ENCODE measurements at regions of chr17 and their contacts with region 1.

Region 1: DNA sequence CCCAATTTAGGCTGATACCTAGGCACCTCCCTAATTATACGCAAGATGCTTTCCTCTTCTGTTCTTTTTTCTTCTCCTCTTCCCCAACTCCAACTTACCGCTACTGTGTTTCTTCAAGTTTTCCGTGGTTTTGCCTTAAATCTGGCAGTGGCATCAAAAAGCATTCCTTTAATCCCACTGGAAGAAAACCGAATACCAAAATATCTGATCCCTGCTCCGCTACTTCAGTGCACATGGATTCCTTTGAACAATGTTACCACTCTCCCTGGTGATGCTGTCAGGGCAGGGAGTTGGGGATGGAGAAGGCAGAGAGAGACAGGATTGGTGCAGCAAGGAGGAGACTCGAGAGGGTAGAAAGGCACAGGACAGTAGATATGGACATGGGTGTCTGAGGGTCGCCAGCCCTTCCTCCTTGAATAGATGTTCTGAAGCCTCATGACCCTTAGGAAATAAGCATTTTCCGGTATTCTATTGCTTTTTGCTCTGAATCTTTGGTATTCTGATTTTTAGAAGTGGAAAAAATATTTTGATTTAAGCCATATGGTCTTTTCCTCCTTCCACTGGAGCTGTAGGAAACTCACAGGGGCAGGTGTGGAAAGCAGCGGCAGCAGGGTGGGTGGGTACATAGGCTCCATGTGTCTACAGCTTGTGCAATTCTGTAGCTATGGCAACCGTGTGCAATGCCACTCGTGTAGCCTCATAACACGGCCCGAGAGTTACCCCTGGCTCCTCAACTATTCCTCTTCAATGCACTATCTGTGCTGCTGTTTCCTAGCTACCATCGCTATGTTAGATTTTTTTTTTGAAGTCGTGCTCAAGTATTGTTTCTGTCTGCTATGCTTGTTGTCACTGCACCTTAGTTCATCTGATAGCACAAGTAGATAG is 32.3 kb upstream of the TANC2 start:
- DNase-seq: peak in 1 of 2 donors; percentile 29
- H3K4me3 ChIP-seq: no peak overlapping the region
- CTCF ChIP-seq: no peak
- POLR2A ChIP-seq: no peak

Region 2: DNA sequence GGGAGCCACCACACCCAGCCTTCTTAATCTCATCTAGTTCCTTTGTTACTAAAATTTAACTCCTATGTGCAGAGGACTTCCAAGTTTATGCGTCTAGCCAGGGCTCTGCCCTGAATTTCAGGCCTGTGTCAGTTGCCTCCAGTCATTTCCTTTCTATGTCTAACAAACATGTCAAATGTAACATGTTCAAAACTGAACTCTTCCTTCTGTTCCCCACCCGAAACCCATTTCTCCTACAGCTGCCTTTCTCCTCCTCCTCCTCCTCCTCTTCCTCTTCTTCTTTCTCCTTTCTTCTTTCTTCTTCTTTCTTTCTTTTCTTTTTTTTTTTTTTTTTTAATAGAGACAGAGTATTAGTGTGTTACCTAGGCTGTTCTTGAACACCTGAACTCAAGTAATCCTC is 394.0 kb before region 1 on chr17:
- intact Hi-C with region 1: no loop called
- DNase-seq: no peak
- H3K4me3 ChIP-seq: no peak overlapping the region
- CTCF ChIP-seq: no peak
- POLR2A ChIP-seq: no peak

Region 3: GRCh38 chr17:62739645-62740388 is 193.9 kb before region 1 on chr17:
- intact Hi-C with region 1: no loop called
- DNase-seq: peak in 1 of 2 donors; percentile 62
- H3K4me3 ChIP-seq: no peak overlapping the region
- CTCF ChIP-seq: no peak
- POLR2A ChIP-seq: no peak

Region 4: GRCh38 chr17:62876673-62877401 is 56.9 kb before region 1 on chr17:
- intact Hi-C with region 1: no loop called
- DNase-seq: no peak
- H3K4me3 ChIP-seq: no peak overlapping the region
- CTCF ChIP-seq: no peak
- POLR2A ChIP-seq: no peak

Region 5: DNA sequence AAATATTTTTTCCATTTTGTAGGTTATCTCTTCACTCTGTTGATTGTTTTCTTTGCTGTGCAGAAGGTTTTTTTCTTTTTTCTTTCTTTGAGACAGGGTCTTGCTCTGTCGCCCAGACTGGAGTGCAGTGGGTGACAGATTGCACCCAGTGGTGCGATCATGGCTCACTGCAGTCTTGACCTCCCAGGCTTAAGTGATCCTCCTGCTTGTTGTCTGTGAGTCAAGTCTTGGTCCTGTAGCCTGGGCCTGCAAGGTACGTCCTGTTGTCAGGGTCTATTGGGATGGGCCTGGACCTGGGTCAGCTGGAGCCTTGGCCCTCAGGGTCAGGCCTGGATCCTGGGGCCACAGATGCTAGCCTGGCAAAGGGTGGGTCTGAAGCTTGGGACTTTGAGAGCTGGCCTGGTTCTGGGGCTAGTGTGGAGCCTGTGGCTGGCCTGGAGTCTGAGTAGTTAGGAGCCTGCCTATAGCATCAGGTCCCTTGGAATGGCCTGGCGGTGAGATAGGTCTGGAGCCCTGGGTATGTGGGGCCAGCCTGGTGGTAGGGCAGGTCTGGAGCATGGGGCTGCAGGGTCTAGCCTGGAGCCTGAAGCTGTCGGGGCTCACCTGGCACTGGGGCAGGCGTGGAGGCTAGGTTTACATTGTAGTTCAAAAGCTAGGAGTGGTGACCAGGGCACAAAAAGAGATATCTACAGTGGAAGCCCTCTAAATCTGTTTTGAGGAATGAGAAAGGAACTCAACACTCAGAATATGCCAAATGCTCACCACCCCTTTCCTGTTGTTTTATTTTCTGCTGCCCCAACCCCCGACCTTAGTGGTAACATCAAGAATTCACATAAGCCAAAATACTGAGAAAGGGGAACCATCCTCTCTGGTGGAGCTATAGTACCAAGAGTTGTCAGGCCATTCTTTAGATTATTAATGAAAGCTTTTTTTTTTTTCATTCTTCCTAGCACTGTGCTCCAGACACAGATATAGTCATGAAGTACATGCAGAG is 132.4 kb after region 1 on chr17:
- intact Hi-C with region 1: no loop called
- DNase-seq: no peak
- H3K4me3 ChIP-seq: no peak overlapping the region
- CTCF ChIP-seq: no peak
- POLR2A ChIP-seq: no peak

Region 6: DNA sequence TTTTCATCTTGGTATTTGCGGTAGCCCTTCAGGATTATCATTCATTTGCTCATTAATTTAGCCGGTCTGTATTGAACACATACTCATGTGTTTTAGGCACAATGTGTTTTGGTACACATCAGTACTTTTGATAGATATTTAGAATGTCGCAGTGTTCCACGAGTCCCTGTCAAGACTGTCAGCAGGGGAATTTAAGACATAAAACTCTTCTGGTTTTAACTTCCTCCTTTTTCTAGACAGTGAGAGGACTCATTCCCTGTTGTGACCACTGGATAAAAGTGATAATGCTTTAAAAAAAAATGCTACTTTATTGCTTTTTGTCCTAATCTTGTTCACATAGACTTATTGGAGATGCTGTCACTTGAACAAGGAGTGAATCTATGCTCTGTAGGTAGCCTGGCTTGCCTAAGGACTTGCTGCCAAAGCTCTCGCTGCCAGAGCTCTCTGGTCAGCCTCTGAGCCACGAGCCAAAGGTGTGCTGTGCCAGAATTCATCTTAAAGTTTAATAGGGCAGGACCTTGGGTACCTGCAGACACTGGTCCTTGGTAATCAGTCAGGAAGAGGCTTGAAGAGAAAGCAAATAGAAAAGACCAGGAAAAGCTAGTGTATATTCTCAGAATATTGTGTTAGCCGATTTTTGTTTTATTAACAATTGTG is 621.9 kb after region 1 on chr17:
- intact Hi-C with region 1: loop called (anchors 5 kb)
- DNase-seq: no peak
- H3K4me3 ChIP-seq: no peak overlapping the region
- CTCF ChIP-seq: no peak
- POLR2A ChIP-seq: no peak

Measured in lower leg skin (tissue), 4 donors.